Activated CD4-positive, alpha-beta memory T cell treated with anti-CD3 and anti-CD28 coated beads, Interleukin-2, amount 10 ng/mL, durations not matched to agents 7 days and 5 days (primary cell): ENCODE measurements at regions of chr14 and their contacts with region 1.

Region 1: GRCh38 chr14:93115069-93115820 is 480 bp downstream of the ITPK1 start:
- DNase-seq: peak; percentile 89
- H3K4me3 Mint-ChIP-seq: peak overlapping the region; percentile 86
- H3K27ac Mint-ChIP-seq: peak overlapping the region; percentile 72
- H3K4me1 Mint-ChIP-seq: peaks cover 30% of the 10 kb centered on the region
- H3K27me3 Mint-ChIP-seq: no peaks in the 10 kb centered on the region

Region 2: DNA sequence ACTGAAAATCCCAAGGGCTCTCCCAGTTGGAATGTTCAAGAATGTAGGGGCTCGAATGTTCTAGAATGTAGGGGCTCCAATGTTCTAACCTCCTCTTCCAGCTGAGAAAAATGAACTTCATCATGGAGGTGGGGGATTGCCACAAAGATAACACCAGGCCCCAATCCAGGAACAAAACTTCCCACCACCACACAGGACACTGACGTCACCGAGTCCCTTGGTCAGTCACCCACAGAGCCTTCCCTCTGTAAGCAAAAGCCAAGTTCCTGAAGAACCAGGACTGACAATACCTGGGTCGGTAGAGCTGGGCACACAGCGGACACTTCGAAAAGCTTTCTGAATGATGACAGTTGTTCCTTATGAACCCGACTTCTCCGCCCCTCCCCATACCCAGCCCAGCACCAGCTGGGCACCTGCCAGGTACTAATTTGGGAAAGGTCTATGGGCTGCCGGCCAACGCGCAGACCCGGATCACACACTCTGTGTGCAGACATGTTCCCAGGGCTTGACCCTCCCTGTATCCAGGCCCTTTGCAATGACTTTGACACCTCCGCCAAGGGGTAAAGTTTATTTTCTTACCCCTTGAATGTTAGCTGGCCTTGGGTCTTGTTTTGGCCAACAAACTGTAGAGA is 18.4 kb before region 1 on chr14:
- CTCF ChIA-PET with region 1: interaction called, 99 read pairs
- POLR2A ChIA-PET with region 1: interaction called, 61 read pairs
- DNase-seq: no peak
- H3K4me3 Mint-ChIP-seq: no peak overlapping the region
- H3K27ac Mint-ChIP-seq: no peak overlapping the region
- H3K4me1 Mint-ChIP-seq: peaks cover 15% of the 10 kb centered on the region
- H3K27me3 Mint-ChIP-seq: no peaks in the 10 kb centered on the region

Region 3: DNA sequence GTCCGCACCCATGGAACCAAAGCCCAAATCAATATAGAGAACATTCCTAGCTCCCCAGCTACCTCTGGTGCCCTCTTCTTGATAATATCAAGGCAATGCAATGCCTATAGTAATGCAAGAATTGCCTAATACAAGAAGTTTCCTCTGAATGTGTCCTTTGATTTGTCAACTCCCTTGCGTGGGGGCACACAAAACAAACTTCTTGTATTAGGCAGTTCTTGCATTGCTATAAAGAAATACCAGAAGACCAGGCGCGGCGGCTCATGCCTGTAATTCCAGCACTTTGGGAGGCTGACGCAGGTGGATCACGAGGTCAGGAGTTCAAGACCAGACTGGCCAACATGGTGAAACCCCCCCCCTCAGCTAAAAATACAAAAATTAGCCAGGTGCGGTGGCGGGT is 10.9 kb after region 1 on chr14:
- CTCF ChIA-PET with region 1: interaction called, 53 read pairs
- POLR2A ChIA-PET with region 1: interaction called, 3 read pairs
- DNase-seq: no peak
- H3K4me3 Mint-ChIP-seq: no peak overlapping the region
- H3K27ac Mint-ChIP-seq: no peak overlapping the region
- H3K4me1 Mint-ChIP-seq: peaks cover under 1% of the 10 kb centered on the region
- H3K27me3 Mint-ChIP-seq: peaks cover 9% of the 10 kb centered on the region

Region 4: GRCh38 chr14:93137864-93138263 is 22.6 kb after region 1 on chr14:
- CTCF ChIA-PET with region 1: interaction called, 53 read pairs
- POLR2A ChIA-PET with region 1: interaction called, 11 read pairs
- DNase-seq: no peak
- H3K4me3 Mint-ChIP-seq: no peak overlapping the region
- H3K27ac Mint-ChIP-seq: no peak overlapping the region
- H3K4me1 Mint-ChIP-seq: peaks cover 4% of the 10 kb centered on the region
- H3K27me3 Mint-ChIP-seq: peaks cover 2% of the 10 kb centered on the region

Region 5: GRCh38 chr14:93184388-93185353 is 69.4 kb after region 1 on chr14 and contains the starts of genes LYSET and MOAP1:
- CTCF ChIA-PET with region 1: interaction called, 38 read pairs
- POLR2A ChIA-PET with region 1: interaction called, 46 read pairs
- DNase-seq: peak; percentile 94
- H3K4me3 Mint-ChIP-seq: peak within 1 kb of the TSS; percentile 94
- H3K27ac Mint-ChIP-seq: peak within 1 kb of the TSS; percentile 80
- H3K4me1 Mint-ChIP-seq: peaks cover 36% of the 10 kb centered on the region
- H3K27me3 Mint-ChIP-seq: no peaks in the 10 kb centered on the region
- total RNA-seq, gene LYSET: 7.4 to 8.3 TPM
- total RNA-seq, gene MOAP1: 23.1 to 24.6 TPM

Region 6: GRCh38 chr14:93219103-93219726 is 104.0 kb after region 1 on chr14:
- CTCF ChIA-PET with region 1: interaction called, 17 read pairs
- POLR2A ChIA-PET with region 1: no interaction called
- DNase-seq: peak; percentile 52
- H3K4me3 Mint-ChIP-seq: no peak overlapping the region
- H3K27ac Mint-ChIP-seq: no peak overlapping the region
- H3K4me1 Mint-ChIP-seq: no peaks in the 10 kb centered on the region
- H3K27me3 Mint-ChIP-seq: no peaks in the 10 kb centered on the region